PC-3 (cell line): ENCODE measurements at regions of chr1 and their contacts with region 1.

Region 1: GRCh38 chr1:215453440-215453839 is 113.7 kb upstream of the KCTD3 start:
- DNase-seq: no peak
- ATAC-seq: no peak
- H3K4me3 ChIP-seq: no peak overlapping the region
- H3K27ac ChIP-seq: no peak overlapping the region
- H3K4me1 ChIP-seq: peaks cover 7% of the 10 kb centered on the region
- H3K27me3 ChIP-seq: no peaks in the 10 kb centered on the region
- CTCF ChIP-seq: no peak

Region 2: DNA sequence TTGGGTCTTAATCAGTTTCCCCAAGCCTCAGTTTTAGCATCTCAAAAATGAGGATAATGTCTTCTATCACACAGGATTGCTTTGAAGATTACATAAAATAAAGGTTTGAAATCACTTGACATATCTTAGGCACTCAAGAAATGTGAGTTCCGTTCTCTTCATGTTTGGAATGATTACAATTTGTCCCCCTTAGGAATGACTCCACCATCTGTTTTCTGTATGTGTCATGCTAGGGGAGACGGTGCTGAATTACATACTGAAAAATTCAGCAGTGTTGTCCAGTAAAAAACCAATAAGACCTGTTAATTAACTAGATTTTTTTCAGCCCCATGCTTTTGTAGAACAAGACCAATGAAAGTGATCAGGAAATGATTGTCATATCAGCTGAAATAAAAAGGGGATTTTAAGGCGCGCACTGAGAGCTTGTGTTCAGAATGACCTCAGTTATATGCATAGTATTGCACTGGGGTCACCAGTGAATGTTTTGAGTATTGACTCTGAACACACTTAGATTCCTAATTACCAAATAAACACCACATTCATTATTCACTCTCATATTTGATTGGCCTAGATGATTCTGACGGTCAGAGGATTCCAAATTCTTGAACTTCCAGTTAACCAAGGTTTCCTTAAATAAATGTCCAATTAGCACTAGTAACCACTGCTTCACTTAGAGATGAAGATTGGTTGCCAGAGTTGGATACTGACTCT is 485.4 kb before region 1 on chr1:
- CTCF ChIA-PET with region 1: no interaction called
- POLR2A ChIA-PET with region 1: interaction called, 22 read pairs
- intact Hi-C with region 1: no loop called
- DNase-seq: no peak
- ATAC-seq: no peak
- H3K4me3 ChIP-seq: no peak overlapping the region
- H3K27ac ChIP-seq: no peak overlapping the region
- H3K4me1 ChIP-seq: no peaks in the 10 kb centered on the region
- H3K27me3 ChIP-seq: no peaks in the 10 kb centered on the region
- CTCF ChIP-seq: no peak

Region 3: DNA sequence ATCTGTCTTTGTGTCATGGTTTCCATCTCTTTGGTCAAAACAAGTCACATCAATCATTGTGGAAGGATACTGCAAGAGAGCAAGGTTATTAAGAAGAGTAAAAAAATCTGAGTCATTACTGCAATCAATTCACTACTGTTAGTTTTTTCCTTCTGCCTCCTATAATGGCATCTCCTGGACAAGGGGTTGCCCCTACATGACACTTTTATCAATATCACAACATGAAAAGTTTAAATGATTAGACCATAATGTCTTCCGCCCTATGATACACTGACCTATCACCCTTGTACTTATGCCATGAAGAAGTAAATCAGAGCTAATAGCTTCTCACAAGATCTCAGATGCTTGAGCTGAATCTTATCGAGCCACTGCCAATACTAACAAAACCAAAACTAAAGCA is 147.0 kb before region 1 on chr1:
- CTCF ChIA-PET with region 1: no interaction called
- POLR2A ChIA-PET with region 1: no interaction called
- intact Hi-C with region 1: no loop called
- DNase-seq: no peak
- ATAC-seq: no peak
- H3K4me3 ChIP-seq: no peak overlapping the region
- H3K27ac ChIP-seq: no peak overlapping the region
- H3K4me1 ChIP-seq: no peaks in the 10 kb centered on the region
- H3K27me3 ChIP-seq: no peaks in the 10 kb centered on the region
- CTCF ChIP-seq: no peak

Region 4: DNA sequence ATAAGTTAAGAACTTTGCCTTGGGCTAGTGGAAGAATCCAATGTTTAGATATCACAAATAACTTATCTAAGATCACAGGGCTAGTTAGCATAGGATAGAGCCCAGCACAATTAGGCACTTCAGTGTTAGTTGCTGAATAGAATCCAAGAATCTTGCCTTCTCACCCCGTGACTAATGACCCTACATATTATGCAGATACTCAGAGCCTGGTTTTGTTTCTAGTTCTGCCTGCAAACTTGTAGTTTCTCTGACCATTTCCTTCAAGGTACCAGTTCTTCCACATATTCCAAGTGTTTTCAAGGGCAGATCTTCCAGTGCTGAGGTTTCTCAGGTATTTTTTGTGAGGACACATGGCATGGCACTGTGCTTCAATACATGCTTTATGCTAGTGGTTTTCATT is 131.6 kb before region 1 on chr1:
- CTCF ChIA-PET with region 1: no interaction called
- POLR2A ChIA-PET with region 1: no interaction called
- intact Hi-C with region 1: no loop called
- DNase-seq: no peak
- ATAC-seq: no peak
- H3K4me3 ChIP-seq: no peak overlapping the region
- H3K27ac ChIP-seq: no peak overlapping the region
- H3K4me1 ChIP-seq: no peaks in the 10 kb centered on the region
- H3K27me3 ChIP-seq: no peaks in the 10 kb centered on the region
- CTCF ChIP-seq: no peak

Region 5: DNA sequence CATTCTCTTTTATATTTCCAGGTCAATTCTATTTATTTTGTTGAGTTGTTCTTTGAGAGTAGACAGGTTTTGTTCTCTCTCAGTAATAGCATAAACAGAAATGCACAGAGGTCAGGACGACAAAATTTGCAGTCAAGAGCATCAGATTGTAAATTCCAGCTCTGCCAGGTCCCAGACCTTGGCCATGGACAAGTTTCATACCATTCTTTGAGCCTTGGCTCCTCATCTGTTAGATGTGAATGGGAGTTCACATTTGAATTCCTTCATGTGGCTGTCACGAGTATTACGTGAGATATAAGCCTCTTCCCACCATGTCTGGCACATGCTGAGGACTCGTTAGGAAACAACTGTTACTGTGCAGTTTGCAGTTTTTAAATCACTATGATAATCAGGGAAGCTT is 20.5 kb after region 1 on chr1:
- CTCF ChIA-PET with region 1: no interaction called
- POLR2A ChIA-PET with region 1: no interaction called
- intact Hi-C with region 1: no loop called
- DNase-seq: no peak
- ATAC-seq: no peak
- H3K4me3 ChIP-seq: no peak overlapping the region
- H3K27ac ChIP-seq: no peak overlapping the region
- H3K4me1 ChIP-seq: peaks cover 31% of the 10 kb centered on the region
- H3K27me3 ChIP-seq: no peaks in the 10 kb centered on the region
- CTCF ChIP-seq: no peak